K562 (cell line): ENCODE measurements at regions of chr17 and their contacts with region 1.

Region 1: GRCh38 chr17:27760069-27760885 is 40.1 kb downstream of the NOS2 start:
- DNase-seq: peak; percentile 63 to 79 (median 70)
- ATAC-seq: peak; percentile 86
- H3K4me3 ChIP-seq: no peak overlapping the region
- H3K27ac ChIP-seq: no peak overlapping the region
- H3K4me1 ChIP-seq: peaks cover 0 to 11% of the 10 kb centered on the region in 2 experiments; a peak in 3 of 5 replicates
- H3K27me3 ChIP-seq: peaks cover 0 to 27% of the 10 kb centered on the region in 2 experiments; a peak in 3 of 5 replicates
- CTCF ChIP-seq: peak; percentile 82 to 95 (median 93)
- EP300 ChIP-seq: no peak
- POLR2A ChIP-seq: no peak
- RAD21 ChIP-seq: peak; percentile 81 to 89

Region 2: DNA sequence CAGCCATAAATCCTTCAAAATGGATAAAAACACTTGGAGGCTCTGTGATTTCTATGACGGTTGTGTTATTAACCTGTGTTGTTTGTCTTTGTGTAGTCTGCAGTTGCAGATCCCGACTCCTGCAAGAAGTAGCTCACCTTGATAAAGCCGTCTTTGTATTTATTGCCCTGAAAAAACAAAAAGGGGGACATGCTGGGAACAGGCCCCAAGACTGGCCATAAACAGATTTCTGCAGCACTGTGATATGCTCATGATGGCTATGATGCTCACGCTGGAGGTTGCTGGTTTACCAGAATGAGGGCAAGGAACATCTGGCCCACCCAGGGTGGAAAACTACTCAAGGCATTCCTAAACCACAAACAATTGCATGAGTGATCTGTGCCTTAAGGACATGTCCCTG is 58.3 kb before region 1 on chr17:
- CTCF ChIA-PET with region 1: no interaction called
- POLR2A ChIA-PET with region 1: no interaction called
- in situ Hi-C with region 1: no loop called
- intact Hi-C with region 1: no loop called
- DNase-seq: no peak
- ATAC-seq: no peak
- H3K4me3 ChIP-seq: no peak overlapping the region
- H3K27ac ChIP-seq: no peak overlapping the region
- H3K4me1 ChIP-seq: no peaks in the 10 kb centered on the region
- H3K27me3 ChIP-seq: no peaks in the 10 kb centered on the region
- CTCF ChIP-seq: no peak
- EP300 ChIP-seq: no peak
- POLR2A ChIP-seq: no peak
- RAD21 ChIP-seq: no peak

Region 3: DNA sequence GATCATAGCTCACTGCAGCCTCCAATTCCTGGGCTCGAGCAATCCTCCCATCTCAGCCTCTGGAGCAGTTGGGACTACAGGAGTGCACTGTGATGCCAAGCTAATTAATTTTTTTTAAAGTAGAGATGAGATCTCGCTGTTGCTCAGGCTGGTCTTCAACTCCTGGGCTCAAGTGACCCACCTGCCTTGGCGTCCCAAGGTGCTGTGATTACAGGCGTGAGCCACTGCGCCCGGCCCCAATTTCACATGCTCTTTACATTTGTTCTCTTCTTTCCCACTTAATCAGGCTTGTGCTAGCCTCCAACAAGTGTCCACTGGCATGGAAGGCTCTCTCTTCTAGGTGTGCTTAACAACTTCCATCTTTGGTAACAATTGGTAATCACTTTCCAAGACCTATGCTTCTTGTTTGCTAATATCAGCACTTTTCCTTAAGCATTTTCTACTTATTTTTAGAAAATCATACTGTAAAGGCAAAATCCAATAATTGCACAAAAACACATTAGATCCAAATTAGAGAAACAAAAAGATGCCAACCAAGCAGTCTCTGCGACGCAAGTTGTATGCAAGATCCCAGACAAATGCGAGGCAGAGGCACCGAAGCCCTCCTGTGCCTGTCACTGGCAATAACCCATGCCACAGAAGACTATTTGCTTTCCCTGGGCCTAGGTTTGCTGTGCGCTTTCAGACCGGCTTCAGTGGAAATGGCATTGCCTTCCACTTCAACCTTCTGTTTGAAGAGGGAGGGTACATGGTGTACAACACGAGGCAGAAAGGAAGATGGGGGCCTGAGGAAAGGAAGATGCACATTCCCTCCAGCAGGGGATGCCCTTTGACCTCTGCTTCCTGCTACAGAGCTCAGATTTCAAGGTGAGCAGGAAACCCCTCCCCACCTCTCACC is 12.6 kb before region 1 on chr17:
- CTCF ChIA-PET with region 1: no interaction called
- POLR2A ChIA-PET with region 1: no interaction called
- in situ Hi-C with region 1: no loop called
- intact Hi-C with region 1: no loop called
- DNase-seq: peak; percentile 32 to 57 (median 49)
- ATAC-seq: peak; percentile 69
- H3K4me3 ChIP-seq: no peak overlapping the region
- H3K27ac ChIP-seq: no peak overlapping the region
- H3K4me1 ChIP-seq: no peaks in the 10 kb centered on the region; a peak in 1 of 5 replicates
- H3K27me3 ChIP-seq: no peaks in the 10 kb centered on the region; a peak in 1 of 5 replicates
- CTCF ChIP-seq: peak; percentile 56 to 64 (median 58)
- EP300 ChIP-seq: no peak
- POLR2A ChIP-seq: no peak
- RAD21 ChIP-seq: no peak

Region 4: GRCh38 chr17:27778193-27778592 is 17.9 kb after region 1 on chr17:
- CTCF ChIA-PET with region 1: no interaction called
- POLR2A ChIA-PET with region 1: no interaction called
- in situ Hi-C with region 1: no loop called
- intact Hi-C with region 1: no loop called
- DNase-seq: peak in 2 of 4 experiments; percentile 20 to 27
- ATAC-seq: 0 out of 3 replicates have a peak, but pooled peaks have one; percentile 42
- H3K4me3 ChIP-seq: no peak overlapping the region
- H3K27ac ChIP-seq: no peak overlapping the region
- H3K4me1 ChIP-seq: peaks cover 6 to 8% of the 10 kb centered on the region in 2 experiments; a peak in 4 of 5 replicates
- H3K27me3 ChIP-seq: peaks cover 41 to 63% of the 10 kb centered on the region in 2 experiments
- CTCF ChIP-seq: no peak
- EP300 ChIP-seq: no peak
- POLR2A ChIP-seq: no peak
- RAD21 ChIP-seq: no peak

Region 5: GRCh38 chr17:27879987-27880608 is 119.8 kb after region 1 on chr17:
- CTCF ChIA-PET with region 1: interaction called, 36 read pairs
- POLR2A ChIA-PET with region 1: no interaction called
- in situ Hi-C with region 1: loop called (anchors 5 kb)
- intact Hi-C with region 1: loop called (anchors 1 kb)
- DNase-seq: peak; percentile 78 to 85 (median 80)
- ATAC-seq: peak; percentile 98
- H3K4me3 ChIP-seq: no peak overlapping the region
- H3K27ac ChIP-seq: no peak overlapping the region
- H3K4me1 ChIP-seq: no peaks in the 10 kb centered on the region
- H3K27me3 ChIP-seq: peaks cover 21 to 40% of the 10 kb centered on the region in 2 experiments
- CTCF ChIP-seq: peak; percentile 90 to 95 (median 92)
- EP300 ChIP-seq: no peak
- POLR2A ChIP-seq: no peak
- RAD21 ChIP-seq: peak; percentile 87 to 92